Naive thymus-derived CD4-positive, alpha-beta T cell (primary cell): ENCODE measurements at regions of chr2 and their contacts with region 1.

Region 1: GRCh38 chr2:207710814-207711740 is at the start of gene CCNYL1:
- DNase-seq: peak; percentile 93 to 98 (median 97)
- ATAC-seq: peak; percentile 98
- H3K4me3 ChIP-seq: peak within 1 kb of the TSS; percentile 88
- H3K4me3 Mint-ChIP-seq: peak within 1 kb of the TSS; percentile 94 to 99 (median 97)
- H3K27ac ChIP-seq: peak within 1 kb of the TSS; percentile 83
- H3K27ac Mint-ChIP-seq: peak within 1 kb of the TSS; percentile 83 to 98 (median 93)
- H3K4me1 ChIP-seq: peaks cover 4 to 11% of the 10 kb centered on the region in 2 donors
- H3K4me1 Mint-ChIP-seq: peaks cover 15 to 32% (median 27%) of the 10 kb centered on the region in 7 donors
- H3K27me3 ChIP-seq: no peaks in the 10 kb centered on the region
- H3K27me3 Mint-ChIP-seq: peaks cover 0 to 3% (median 0%) of the 10 kb centered on the region in 5 donors
- total RNA-seq, gene CCNYL1: 6.7 to 16.7 (median 10.7) TPM

Region 2: DNA sequence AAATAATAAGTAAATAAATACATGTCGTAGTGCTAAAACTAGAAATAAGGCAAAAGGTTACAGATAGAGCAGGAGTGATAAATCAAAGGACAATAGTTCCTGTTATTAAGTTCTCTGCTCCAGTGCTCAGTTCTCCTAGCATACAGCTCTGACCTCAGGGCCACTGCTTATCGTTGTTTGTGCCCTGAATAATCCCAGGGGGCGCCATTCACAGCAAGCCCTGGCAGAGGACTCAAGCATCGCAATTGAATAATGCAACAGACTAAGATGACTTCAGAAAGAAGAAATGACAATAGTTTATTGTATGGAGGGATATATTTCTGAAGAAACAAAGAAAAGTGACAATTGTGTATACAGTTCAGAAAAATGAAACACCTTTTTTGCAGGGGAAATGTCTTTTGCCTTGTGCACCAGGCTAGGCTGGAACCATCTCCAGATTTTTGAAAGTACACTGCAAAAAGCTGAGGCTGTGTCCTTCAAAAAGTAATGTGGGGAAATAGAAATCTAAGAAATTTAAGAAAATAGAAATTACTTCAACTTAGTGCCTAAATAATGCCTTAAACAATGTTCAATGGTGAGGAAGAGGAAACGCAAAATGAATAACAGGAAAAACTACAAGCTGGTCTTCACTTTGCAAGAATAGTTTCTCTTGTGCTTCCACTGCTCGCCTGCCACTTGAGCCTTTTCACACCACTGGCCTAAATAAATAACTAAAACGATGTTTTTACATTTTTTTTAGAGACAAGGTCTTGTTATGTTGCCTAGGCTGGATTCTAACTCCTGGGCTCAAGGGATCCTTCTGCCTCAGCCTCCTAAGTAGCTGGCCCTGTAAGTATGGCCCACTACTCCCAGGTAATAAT is 18.6 kb before region 1 on chr2:
- CTCF ChIA-PET with region 1: no interaction called
- POLR2A ChIA-PET with region 1: interaction called, 3 read pairs
- intact Hi-C with region 1: loop called in 1 of 2 experiments (anchors 1 kb)
- DNase-seq: peak in 8 of 9 donors; percentile 21 to 58 (median 41)
- ATAC-seq: peak; percentile 82
- H3K4me3 ChIP-seq: no peak overlapping the region
- H3K4me3 Mint-ChIP-seq: peak overlapping the region in 2 of 10 donors; percentile 35 to 56
- H3K27ac ChIP-seq: no peak overlapping the region
- H3K27ac Mint-ChIP-seq: no peak overlapping the region
- H3K4me1 ChIP-seq: no peaks in the 10 kb centered on the region
- H3K4me1 Mint-ChIP-seq: peaks cover 0 to 6% (median 5%) of the 10 kb centered on the region in 7 donors
- H3K27me3 ChIP-seq: no peaks in the 10 kb centered on the region
- H3K27me3 Mint-ChIP-seq: peaks cover 0 to 5% (median 0%) of the 10 kb centered on the region in 5 donors

Region 3: GRCh38 chr2:207725873-207726578 is 14.9 kb after region 1 on chr2:
- CTCF ChIA-PET with region 1: interaction called, 6 read pairs
- POLR2A ChIA-PET with region 1: interaction called, 15 read pairs
- intact Hi-C with region 1: loop called in 1 of 2 experiments (anchors 2 kb)
- DNase-seq: peak in 5 of 9 donors; percentile 25 to 38 (median 37)
- ATAC-seq: no peak
- H3K4me3 ChIP-seq: no peak overlapping the region
- H3K4me3 Mint-ChIP-seq: peak overlapping the region in 1 of 10 donors; percentile 19
- H3K27ac ChIP-seq: no peak overlapping the region
- H3K27ac Mint-ChIP-seq: peak overlapping the region in 4 of 9 donors; percentile 41 to 67 (median 52)
- H3K4me1 ChIP-seq: peaks cover 0 to 6% of the 10 kb centered on the region in 2 donors
- H3K4me1 Mint-ChIP-seq: peaks cover 11 to 50% (median 41%) of the 10 kb centered on the region in 7 donors
- H3K27me3 ChIP-seq: no peaks in the 10 kb centered on the region
- H3K27me3 Mint-ChIP-seq: no peaks in the 10 kb centered on the region

Region 4: DNA sequence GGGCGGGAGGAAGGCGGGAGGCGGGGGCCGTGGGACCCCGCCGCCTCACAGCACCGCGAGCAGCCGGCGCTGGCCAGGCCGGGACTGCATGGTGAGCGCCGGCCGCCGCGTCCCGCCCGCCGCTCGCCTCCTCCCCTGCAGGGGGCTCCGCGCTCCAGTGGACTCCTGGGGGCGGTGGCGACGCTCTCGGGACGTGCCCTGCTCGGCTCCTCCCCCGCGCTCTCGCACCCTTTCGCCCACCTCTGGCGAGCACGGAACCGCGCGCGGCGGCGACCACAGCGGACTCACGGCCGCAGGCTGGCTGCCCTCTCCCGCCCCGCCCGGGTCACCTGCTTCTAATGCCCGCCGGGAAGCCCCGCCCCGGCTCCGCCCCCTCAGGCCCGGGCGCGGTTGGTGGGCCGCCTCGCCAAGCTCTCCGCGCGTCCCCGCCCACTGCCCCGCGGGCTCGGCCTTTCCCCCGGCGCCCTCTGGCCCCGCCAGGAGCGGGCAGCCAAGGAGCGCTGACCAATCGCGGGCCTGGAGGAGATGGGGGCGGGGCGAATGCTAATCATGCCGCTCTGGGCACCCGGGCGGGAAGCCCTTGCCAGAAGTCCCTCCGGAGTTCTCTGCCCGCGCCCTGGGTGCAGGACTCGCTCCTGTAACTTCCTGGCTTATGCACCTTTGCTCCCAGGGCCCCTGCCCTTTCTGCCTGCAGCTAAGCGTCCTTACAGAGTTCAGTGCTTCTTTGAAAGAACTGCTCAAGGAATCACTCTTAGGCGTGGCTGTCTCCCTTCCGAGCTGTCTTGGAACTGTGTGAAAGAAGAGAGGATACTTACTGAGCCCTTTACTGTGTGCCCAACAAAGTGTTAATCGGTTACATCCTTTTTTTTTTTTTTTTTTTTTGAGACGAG is 58.8 kb after region 1 on chr2 and contains the start of gene FZD5:
- CTCF ChIA-PET with region 1: no interaction called
- POLR2A ChIA-PET with region 1: interaction called, 5 read pairs
- intact Hi-C with region 1: loop called (anchors 1 kb)
- DNase-seq: peak in 8 of 9 donors; percentile 29 to 92 (median 37)
- ATAC-seq: peak; percentile 91
- H3K4me3 ChIP-seq: peak within 1 kb of the TSS; percentile 63
- H3K4me3 Mint-ChIP-seq: peak within 1 kb of the TSS; percentile 87 to 98 (median 94)
- H3K27ac ChIP-seq: no peak within 1 kb of the TSS
- H3K27ac Mint-ChIP-seq: peak within 1 kb of the TSS in 4 of 9 donors; percentile 31 to 81 (median 66)
- H3K4me1 ChIP-seq: peaks cover 20 to 24% of the 10 kb centered on the region in 2 donors
- H3K4me1 Mint-ChIP-seq: peaks cover 9 to 37% (median 29%) of the 10 kb centered on the region in 7 donors
- H3K27me3 ChIP-seq: peaks cover 0 to 3% of the 10 kb centered on the region in 2 donors
- H3K27me3 Mint-ChIP-seq: peaks cover 14 to 64% (median 23%) of the 10 kb centered on the region in 5 donors
- total RNA-seq, gene FZD5: 0.13 to 0.93 (median 0.27) TPM

Region 5: GRCh38 chr2:207782238-207783030 is 71.4 kb after region 1 on chr2:
- CTCF ChIA-PET with region 1: no interaction called
- POLR2A ChIA-PET with region 1: no interaction called
- intact Hi-C with region 1: no loop called
- DNase-seq: no peak
- ATAC-seq: no peak
- H3K4me3 ChIP-seq: no peak overlapping the region
- H3K4me3 Mint-ChIP-seq: no peak overlapping the region
- H3K27ac ChIP-seq: no peak overlapping the region
- H3K27ac Mint-ChIP-seq: no peak overlapping the region
- H3K4me1 ChIP-seq: no peaks in the 10 kb centered on the region
- H3K4me1 Mint-ChIP-seq: peaks cover 0 to 3% (median 0%) of the 10 kb centered on the region in 7 donors
- H3K27me3 ChIP-seq: no peaks in the 10 kb centered on the region
- H3K27me3 Mint-ChIP-seq: peaks cover 0 to 15% (median 0%) of the 10 kb centered on the region in 5 donors

Region 6: DNA sequence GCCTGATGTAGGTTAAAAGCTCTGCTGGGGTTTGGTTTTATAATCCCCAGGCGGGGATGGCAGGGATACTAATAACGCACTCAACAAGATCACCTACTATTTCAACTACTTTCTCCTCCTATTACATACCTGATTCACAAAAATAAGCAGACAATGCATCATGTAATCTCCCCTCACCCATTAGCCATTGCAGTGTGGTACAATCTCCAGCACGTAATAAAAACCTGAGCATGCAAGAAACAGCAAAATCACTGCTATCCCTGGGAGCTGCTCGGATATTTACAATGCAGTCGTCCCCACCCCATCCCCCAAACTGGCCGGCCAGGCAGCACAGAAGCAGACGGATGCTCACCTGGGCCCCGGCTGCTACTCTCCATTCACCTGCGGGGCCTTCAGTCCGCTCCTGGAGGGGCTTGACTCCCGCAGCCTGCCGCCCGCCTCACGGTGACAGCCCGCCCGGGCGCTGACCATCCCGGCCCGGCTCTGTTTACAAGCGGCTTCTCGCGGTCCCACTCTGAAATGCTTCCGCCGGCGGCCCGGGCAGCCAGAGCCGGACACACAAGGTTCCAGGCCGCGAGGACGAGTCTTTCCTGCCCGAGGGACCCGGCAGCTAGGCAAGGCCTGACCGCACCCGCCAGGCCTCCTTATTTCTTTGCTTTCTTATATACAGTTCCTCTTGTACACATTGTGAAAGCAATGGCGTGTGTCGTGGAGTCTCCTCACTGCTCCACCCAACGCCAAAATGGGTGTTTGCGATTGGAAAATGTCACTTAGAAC is 314.1 kb after region 1 on chr2 and contains the start of gene PLEKHM3:
- CTCF ChIA-PET with region 1: no interaction called
- POLR2A ChIA-PET with region 1: interaction called, 5 read pairs
- intact Hi-C with region 1: loop called (anchors 1 kb)
- DNase-seq: peak; percentile 12 to 80 (median 62)
- ATAC-seq: peak; percentile 93
- H3K4me3 ChIP-seq: peak within 1 kb of the TSS; percentile 88
- H3K4me3 Mint-ChIP-seq: peak within 1 kb of the TSS; percentile 85 to 100 (median 96)
- H3K27ac ChIP-seq: peak within 1 kb of the TSS; percentile 76
- H3K27ac Mint-ChIP-seq: peak within 1 kb of the TSS; percentile 89 to 98 (median 94)
- H3K4me1 ChIP-seq: peaks cover 0 to 4% of the 10 kb centered on the region in 2 donors
- H3K4me1 Mint-ChIP-seq: peaks cover 12 to 34% (median 27%) of the 10 kb centered on the region in 7 donors
- H3K27me3 ChIP-seq: no peaks in the 10 kb centered on the region
- H3K27me3 Mint-ChIP-seq: no peaks in the 10 kb centered on the region
- total RNA-seq, gene PLEKHM3: 6.1 to 19.4 (median 15.5) TPM

Region 7: GRCh38 chr2:208254871-208255556 is 543.9 kb after region 1 on chr2 and contains the start of gene IDH1:
- CTCF ChIA-PET with region 1: no interaction called
- POLR2A ChIA-PET with region 1: no interaction called
- intact Hi-C with region 1: loop called (anchors 2 kb)
- DNase-seq: peak; percentile 79 to 97 (median 88)
- ATAC-seq: peak; percentile 95
- H3K4me3 ChIP-seq: peak within 1 kb of the TSS; percentile 70
- H3K4me3 Mint-ChIP-seq: peak within 1 kb of the TSS; percentile 93 to 100 (median 97)
- H3K27ac ChIP-seq: peak within 1 kb of the TSS; percentile 62
- H3K27ac Mint-ChIP-seq: peak within 1 kb of the TSS; percentile 47 to 91 (median 79)
- H3K4me1 ChIP-seq: peaks cover 0 to 9% of the 10 kb centered on the region in 2 donors
- H3K4me1 Mint-ChIP-seq: peaks cover 8 to 28% (median 23%) of the 10 kb centered on the region in 7 donors
- H3K27me3 ChIP-seq: no peaks in the 10 kb centered on the region
- H3K27me3 Mint-ChIP-seq: peaks cover 0 to 3% (median 0%) of the 10 kb centered on the region in 5 donors
- total RNA-seq, gene IDH1: 5.0 to 26.4 (median 20.4) TPM